PC-3 (cell line): ENCODE measurements at regions of chr14 and their contacts with region 1.

Region 1: DNA sequence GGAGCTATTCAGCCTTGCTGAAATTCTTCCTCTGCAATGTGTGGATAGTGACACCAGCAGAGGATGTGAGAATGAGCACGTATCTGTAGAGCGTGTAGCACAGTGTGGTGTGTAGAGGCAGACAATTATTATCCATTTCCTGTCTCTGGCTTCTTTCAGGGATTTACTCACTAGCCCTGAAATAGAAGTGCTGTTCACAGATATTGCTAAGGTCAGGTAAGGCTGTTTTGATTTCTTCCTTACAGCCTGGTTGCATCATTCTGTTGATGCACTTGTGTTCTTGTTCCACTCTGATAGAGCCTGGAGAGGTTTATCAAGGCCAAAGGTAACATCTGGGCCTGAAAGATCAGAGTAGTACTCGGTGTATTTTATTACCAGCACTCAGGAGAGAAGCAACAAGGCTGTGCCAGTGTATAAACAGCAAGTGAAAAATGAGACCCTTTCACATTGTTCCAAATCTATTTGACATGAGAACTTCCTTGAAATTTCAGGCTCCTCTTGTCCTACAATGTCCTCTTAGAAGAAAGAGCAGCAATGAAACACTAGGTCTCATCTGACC is 16.7 kb downstream of the ARG2 start:
- DNase-seq: no peak
- ATAC-seq: peak; percentile 79
- H3K4me3 ChIP-seq: no peak overlapping the region
- H3K27ac ChIP-seq: no peak overlapping the region
- H3K4me1 ChIP-seq: no peaks in the 10 kb centered on the region
- H3K27me3 ChIP-seq: no peaks in the 10 kb centered on the region
- CTCF ChIP-seq: no peak

Region 2: GRCh38 chr14:67599698-67600561 is 36.5 kb before region 1 on chr14 and contains the start of gene PIGH:
- CTCF ChIA-PET with region 1: interaction called, 3 read pairs
- POLR2A ChIA-PET with region 1: interaction called, 20 read pairs
- intact Hi-C with region 1: no loop called
- DNase-seq: peak; percentile 88
- ATAC-seq: peak; percentile 97
- H3K4me3 ChIP-seq: peak within 1 kb of the TSS; percentile 91
- H3K27ac ChIP-seq: peak within 1 kb of the TSS; percentile 39
- H3K4me1 ChIP-seq: peaks cover 14% of the 10 kb centered on the region; the same call in 1 of the 2 replicates
- H3K27me3 ChIP-seq: no peaks in the 10 kb centered on the region
- CTCF ChIP-seq: peak; percentile 63
- total RNA-seq, gene PIGH: 63.8 and 66.4 TPM in 2 replicates

Region 3: GRCh38 chr14:67652189-67652588 is 15.7 kb after region 1 on chr14:
- CTCF ChIA-PET with region 1: interaction called, 13 read pairs
- POLR2A ChIA-PET with region 1: no interaction called
- intact Hi-C with region 1: no loop called
- DNase-seq: no peak
- ATAC-seq: no peak
- H3K4me3 ChIP-seq: no peak overlapping the region
- H3K27ac ChIP-seq: no peak overlapping the region
- H3K4me1 ChIP-seq: no peaks in the 10 kb centered on the region
- H3K27me3 ChIP-seq: no peaks in the 10 kb centered on the region
- CTCF ChIP-seq: no peak

Region 4: DNA sequence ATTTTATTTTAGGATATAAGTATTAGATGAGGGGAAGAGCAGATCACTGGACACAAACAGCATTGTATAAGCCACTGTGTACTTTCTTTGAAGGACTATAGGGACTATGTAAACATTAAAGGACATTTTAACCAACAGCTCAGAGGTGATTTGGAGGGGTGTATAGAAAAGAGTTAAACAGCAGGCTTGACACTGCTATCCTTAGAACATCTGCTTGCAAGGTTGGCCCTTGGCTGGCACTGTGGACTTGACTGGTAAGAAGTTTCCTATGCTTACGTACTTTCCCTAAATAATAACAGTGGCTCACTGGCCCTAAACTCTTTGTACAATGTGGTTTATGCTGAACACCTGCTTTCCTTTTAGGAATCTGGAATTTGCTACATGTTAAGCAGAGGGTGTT is 151.2 kb after region 1 on chr14:
- CTCF ChIA-PET with region 1: no interaction called
- POLR2A ChIA-PET with region 1: no interaction called
- intact Hi-C with region 1: no loop called
- DNase-seq: no peak
- ATAC-seq: no peak
- H3K4me3 ChIP-seq: no peak overlapping the region
- H3K27ac ChIP-seq: no peak overlapping the region
- H3K4me1 ChIP-seq: no peaks in the 10 kb centered on the region
- H3K27me3 ChIP-seq: no peaks in the 10 kb centered on the region
- CTCF ChIP-seq: no peak

Region 5: GRCh38 chr14:68124979-68125731 is 488.7 kb after region 1 on chr14:
- CTCF ChIA-PET with region 1: no interaction called
- POLR2A ChIA-PET with region 1: no interaction called
- intact Hi-C with region 1: no loop called
- DNase-seq: peak; percentile 79
- ATAC-seq: peak; percentile 97
- H3K4me3 ChIP-seq: no peak overlapping the region; the same call in 1 of the 2 replicates
- H3K27ac ChIP-seq: peak overlapping the region; percentile 55
- H3K4me1 ChIP-seq: peaks cover 14% of the 10 kb centered on the region
- H3K27me3 ChIP-seq: no peaks in the 10 kb centered on the region
- CTCF ChIP-seq: no peak